GM12878 (cell line): ENCODE measurements at regions of chr6 and their contacts with region 1.

Region 1: GRCh38 chr6:97705568-97705967 is 422.6 kb upstream of the MMS22L start:
- DNase-seq: no peak
- ATAC-seq: no peak
- H3K4me3 ChIP-seq: no peak overlapping the region
- H3K27ac ChIP-seq: no peak overlapping the region
- H3K4me1 ChIP-seq: no peaks in the 10 kb centered on the region
- H3K27me3 ChIP-seq: no peaks in the 10 kb centered on the region
- CTCF ChIP-seq: peak; percentile 6 to 39 (median 37); a peak in 3 of 6 replicates
- EP300 ChIP-seq: no peak
- POLR2A ChIP-seq: no peak
- RAD21 ChIP-seq: peak; percentile 52

Region 2: GRCh38 chr6:97465877-97466561 is 239.5 kb before region 1 on chr6:
- CTCF ChIA-PET with region 1: no interaction called
- POLR2A ChIA-PET with region 1: no interaction called
- RAD21 ChIA-PET with region 1: no interaction called
- SMC1A ChIA-PET with region 1: no interaction called
- in situ Hi-C with region 1: no loop called
- intact Hi-C with region 1: no loop called
- DNase-seq: no peak
- ATAC-seq: no peak
- H3K4me3 ChIP-seq: no peak overlapping the region
- H3K27ac ChIP-seq: no peak overlapping the region
- H3K4me1 ChIP-seq: no peaks in the 10 kb centered on the region
- H3K27me3 ChIP-seq: no peaks in the 10 kb centered on the region
- CTCF ChIP-seq: no peak
- EP300 ChIP-seq: no peak
- POLR2A ChIP-seq: no peak
- RAD21 ChIP-seq: no peak

Region 3: DNA sequence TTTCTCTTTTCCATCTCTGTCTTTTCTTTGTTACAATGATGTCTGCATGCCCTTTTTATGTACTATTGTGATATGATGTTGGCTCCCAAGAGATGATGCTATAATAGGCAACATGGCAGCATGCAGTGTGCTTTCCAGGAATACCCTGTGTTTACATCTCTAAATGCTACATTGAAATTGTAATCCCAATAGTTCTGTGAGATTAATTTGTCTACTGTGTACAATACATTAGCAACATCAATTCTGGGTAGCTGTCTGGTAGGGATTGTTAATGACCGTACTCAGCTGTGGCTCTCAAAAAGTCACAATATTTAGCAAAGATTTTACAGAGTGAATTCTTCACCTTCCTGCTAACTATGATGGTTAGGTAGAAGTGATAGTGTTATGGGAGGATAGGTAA is 196.9 kb before region 1 on chr6:
- CTCF ChIA-PET with region 1: no interaction called
- POLR2A ChIA-PET with region 1: no interaction called
- RAD21 ChIA-PET with region 1: no interaction called
- SMC1A ChIA-PET with region 1: no interaction called
- in situ Hi-C with region 1: no loop called
- intact Hi-C with region 1: no loop called
- DNase-seq: no peak
- ATAC-seq: no peak
- H3K4me3 ChIP-seq: no peak overlapping the region
- H3K27ac ChIP-seq: no peak overlapping the region
- H3K4me1 ChIP-seq: no peaks in the 10 kb centered on the region
- H3K27me3 ChIP-seq: no peaks in the 10 kb centered on the region
- CTCF ChIP-seq: no peak
- EP300 ChIP-seq: no peak
- POLR2A ChIP-seq: no peak
- RAD21 ChIP-seq: no peak

Region 4: DNA sequence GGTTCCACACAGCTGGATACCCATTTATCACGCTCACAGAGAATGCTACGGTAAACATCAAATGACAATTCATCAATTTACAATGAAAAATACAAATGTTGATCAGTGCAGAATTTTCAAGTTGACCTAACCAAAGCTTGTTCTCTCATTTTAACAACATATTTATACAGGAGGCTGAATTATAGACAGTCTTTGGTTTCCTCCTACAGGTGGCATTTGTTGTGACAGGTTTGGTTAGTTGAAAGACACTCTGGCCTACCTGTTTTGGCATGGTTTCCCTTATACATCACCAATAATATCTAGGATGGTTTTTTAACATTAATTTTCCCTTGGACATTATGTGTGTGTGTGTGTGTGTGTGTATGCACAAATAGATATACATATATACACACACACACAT is 219.9 kb after region 1 on chr6:
- CTCF ChIA-PET with region 1: no interaction called
- POLR2A ChIA-PET with region 1: no interaction called
- RAD21 ChIA-PET with region 1: no interaction called
- SMC1A ChIA-PET with region 1: no interaction called
- in situ Hi-C with region 1: no loop called
- intact Hi-C with region 1: loop called (anchors 10 kb)
- DNase-seq: no peak
- ATAC-seq: no peak
- H3K4me3 ChIP-seq: no peak overlapping the region
- H3K27ac ChIP-seq: no peak overlapping the region
- H3K4me1 ChIP-seq: no peaks in the 10 kb centered on the region
- H3K27me3 ChIP-seq: no peaks in the 10 kb centered on the region
- CTCF ChIP-seq: peak in 1 of 3 experiments; percentile 38; a peak in 3 of 6 replicates
- EP300 ChIP-seq: no peak
- POLR2A ChIP-seq: no peak
- RAD21 ChIP-seq: peak; percentile 49; the same call in 1 of the 2 replicates